ENCODE measurements at regions of chr1 and their contacts with region 1.

Region 1: DNA sequence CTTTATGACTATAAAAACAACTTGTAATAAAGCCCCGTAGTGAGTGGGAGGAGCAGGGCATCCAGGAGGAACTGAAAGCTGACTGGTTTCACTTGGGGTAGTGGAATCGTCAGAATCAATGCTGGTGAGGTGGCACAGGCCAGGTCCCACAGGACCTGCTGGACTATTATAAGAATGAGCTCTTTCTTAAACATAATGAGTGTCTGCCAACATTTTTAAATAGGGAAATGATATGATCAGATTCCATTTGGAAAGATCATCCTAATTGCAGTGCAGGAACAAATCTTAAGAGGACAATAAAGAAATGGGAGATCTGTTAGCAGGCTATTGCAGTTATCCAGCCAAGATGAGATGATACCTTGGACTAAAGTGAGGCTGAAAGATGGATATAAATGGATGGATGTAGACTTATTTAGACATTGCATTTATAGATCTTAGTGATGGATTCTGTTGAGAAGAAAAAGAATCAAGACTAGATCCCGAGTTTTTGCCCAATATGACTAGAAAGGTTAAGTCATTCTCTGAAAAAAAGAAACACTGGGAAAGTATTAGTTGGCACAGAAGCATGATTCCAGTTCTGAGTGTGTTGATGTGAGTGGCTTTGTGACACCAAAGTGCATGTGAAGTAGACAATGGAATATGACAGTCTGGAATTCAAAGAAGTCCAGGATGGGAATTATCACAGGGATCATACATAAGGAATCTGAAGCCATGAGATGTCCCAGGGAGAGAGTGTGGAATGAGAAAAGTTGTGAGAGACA is 153.3 kb upstream of the SGIP1 start:
- DNase-seq: peak; percentile 87
- ATAC-seq: peak; percentile 95
- H3K4me3 ChIP-seq: peak overlapping the region; percentile 55
- H3K27ac ChIP-seq: peak overlapping the region; percentile 83
- H3K4me1 ChIP-seq: peaks cover 39% of the 10 kb centered on the region
- H3K27me3 ChIP-seq: no peaks in the 10 kb centered on the region
- CTCF ChIP-seq: no peak
- EP300 ChIP-seq: peak; percentile 99
- POLR2A ChIP-seq: no peak
- RAD21 ChIP-seq: no peak

Region 2: GRCh38 chr1:66360285-66360724 is 20.3 kb before region 1 on chr1:
- CTCF ChIA-PET with region 1: interaction called, 76 read pairs
- POLR2A ChIA-PET with region 1: interaction called, 4 read pairs
- RAD21 ChIA-PET with region 1: interaction called, 41 read pairs
- SMC1A ChIA-PET with region 1: interaction called, 63 read pairs
- in situ Hi-C with region 1: no loop called
- intact Hi-C with region 1: no loop called
- DNase-seq: no peak
- ATAC-seq: peak; percentile 51
- H3K4me3 ChIP-seq: no peak overlapping the region
- H3K27ac ChIP-seq: no peak overlapping the region
- H3K4me1 ChIP-seq: peaks cover 16% of the 10 kb centered on the region
- H3K27me3 ChIP-seq: no peaks in the 10 kb centered on the region
- CTCF ChIP-seq: peak; percentile 30 to 44 (median 37); a peak in 4 of 6 replicates
- EP300 ChIP-seq: no peak
- POLR2A ChIP-seq: no peak
- RAD21 ChIP-seq: peak; percentile 59

Region 3: DNA sequence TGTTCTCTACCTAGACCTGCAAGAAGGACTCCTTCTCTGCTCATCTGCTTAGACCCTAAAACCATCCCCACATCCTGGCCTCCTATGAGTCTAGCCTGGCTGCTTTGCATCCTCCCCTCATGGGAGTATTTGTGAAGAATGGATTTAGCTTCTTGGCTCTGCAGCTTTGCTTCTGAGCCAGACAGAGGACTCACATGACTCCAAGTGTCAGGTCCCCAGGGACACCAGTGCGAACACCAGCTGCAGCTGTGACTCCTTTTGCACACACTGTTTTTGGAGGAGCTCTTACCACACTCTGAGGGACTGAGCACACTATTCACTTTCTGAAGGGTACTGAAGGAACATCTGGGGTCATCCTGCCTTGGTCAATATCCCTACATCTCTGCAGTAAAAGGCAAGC is 21.6 kb after region 1 on chr1:
- CTCF ChIA-PET with region 1: interaction called, 32 read pairs
- POLR2A ChIA-PET with region 1: interaction called, 19 read pairs
- RAD21 ChIA-PET with region 1: interaction called, 74 read pairs
- SMC1A ChIA-PET with region 1: interaction called, 253 read pairs
- in situ Hi-C with region 1: no loop called
- intact Hi-C with region 1: loop called (anchors 1 kb)
- DNase-seq: peak; percentile 87
- ATAC-seq: peak; percentile 76
- H3K4me3 ChIP-seq: no peak overlapping the region
- H3K27ac ChIP-seq: peak overlapping the region; percentile 77
- H3K4me1 ChIP-seq: peaks cover 58% of the 10 kb centered on the region
- H3K27me3 ChIP-seq: no peaks in the 10 kb centered on the region
- CTCF ChIP-seq: no peak
- EP300 ChIP-seq: peak; percentile 88 to 95; a peak in 3 of 4 replicates
- POLR2A ChIP-seq: 0 out of 2 replicates have a peak, but pooled peaks have one; percentile 42
- RAD21 ChIP-seq: no peak

Region 4: GRCh38 chr1:66618390-66618789 is 237.8 kb after region 1 on chr1:
- CTCF ChIA-PET with region 1: no interaction called
- POLR2A ChIA-PET with region 1: no interaction called
- RAD21 ChIA-PET with region 1: no interaction called
- SMC1A ChIA-PET with region 1: no interaction called
- in situ Hi-C with region 1: no loop called
- intact Hi-C with region 1: no loop called
- DNase-seq: no peak
- ATAC-seq: no peak
- H3K4me3 ChIP-seq: no peak overlapping the region
- H3K27ac ChIP-seq: no peak overlapping the region
- H3K4me1 ChIP-seq: no peaks in the 10 kb centered on the region
- H3K27me3 ChIP-seq: peaks cover 0 to 3% of the 10 kb centered on the region in 2 experiments; a peak in 1 of 4 replicates
- CTCF ChIP-seq: no peak
- EP300 ChIP-seq: no peak
- POLR2A ChIP-seq: no peak
- RAD21 ChIP-seq: no peak